Right cardiac atrium (tissue), 5 donors: ENCODE measurements at regions of chr9 and their contacts with region 1.

Region 1: GRCh38 chr9:1604942-1605560 is 410.1 kb upstream of the SMARCA2 start:
- DNase-seq: no peak
- ATAC-seq: no peak
- H3K4me3 ChIP-seq: no peak overlapping the region
- H3K27ac ChIP-seq: no peak overlapping the region
- H3K4me1 ChIP-seq: no peaks in the 10 kb centered on the region
- H3K27me3 ChIP-seq: no peaks in the 10 kb centered on the region

Region 2: GRCh38 chr9:1460143-1460769 is 144.8 kb before region 1 on chr9:
- intact Hi-C with region 1: loop called in 2 of 4 experiments (anchors 5 to 10 kb)
- DNase-seq: no peak
- ATAC-seq: no peak
- H3K4me3 ChIP-seq: no peak overlapping the region
- H3K27ac ChIP-seq: no peak overlapping the region
- H3K4me1 ChIP-seq: no peaks in the 10 kb centered on the region
- H3K27me3 ChIP-seq: no peaks in the 10 kb centered on the region